Activated CD4-positive, alpha-beta memory T cell treated with anti-CD3 and anti-CD28 coated beads for 36 hours (primary cell): ENCODE measurements at regions of chr13 and their contacts with region 1.

Region 1: DNA sequence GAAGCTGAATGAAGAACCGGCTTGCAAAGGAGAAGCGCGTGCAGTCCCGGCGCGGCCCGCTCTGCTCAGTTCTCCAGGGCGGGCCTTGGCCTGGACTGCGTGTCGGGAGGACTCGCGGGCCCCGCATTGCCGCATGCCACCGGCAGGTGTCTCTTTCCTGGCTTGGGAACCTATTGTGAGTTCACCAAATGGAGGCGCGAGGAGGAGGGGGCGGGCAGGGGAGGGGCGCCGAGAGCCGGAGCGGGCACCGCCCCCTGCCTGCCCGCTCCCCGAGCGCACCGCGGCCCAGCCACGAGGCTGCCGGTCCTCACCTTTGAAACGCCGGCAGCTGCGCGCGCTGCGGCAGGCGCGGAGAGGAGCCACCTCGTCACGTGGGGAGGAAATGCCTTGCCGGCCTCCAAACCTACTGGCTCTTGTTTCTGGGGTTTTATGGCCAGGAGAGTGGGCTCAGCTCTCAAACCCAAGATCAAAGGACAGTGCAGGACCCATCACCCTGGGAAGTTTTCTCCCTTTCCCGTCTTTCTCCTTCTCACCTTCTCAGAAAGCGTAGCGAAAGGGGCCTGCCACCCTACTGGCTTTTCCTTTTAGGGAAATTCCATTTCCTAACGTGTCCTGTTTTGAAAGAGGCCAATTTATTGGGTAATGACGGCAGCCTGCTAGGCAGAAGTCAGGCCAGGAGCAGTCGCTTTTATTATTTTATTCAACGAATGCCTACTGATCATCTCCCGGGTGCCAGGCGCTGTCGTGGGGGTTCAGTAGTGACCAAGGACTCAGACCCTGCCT is 13.8 kb upstream of the UBE2L5 start:
- DNase-seq: peak; percentile 97
- H3K4me3 Mint-ChIP-seq: peak overlapping the region; percentile 43
- H3K27ac Mint-ChIP-seq: peak overlapping the region; percentile 2
- H3K4me1 Mint-ChIP-seq: peaks cover 18% of the 10 kb centered on the region
- H3K27me3 Mint-ChIP-seq: no peaks in the 10 kb centered on the region

Region 2: GRCh38 chr13:30306762-30307193 is 101.7 kb before region 1 on chr13:
- CTCF ChIA-PET with region 1: interaction called, 11 read pairs
- POLR2A ChIA-PET with region 1: no interaction called
- intact Hi-C with region 1: loop called (anchors 1 kb)
- DNase-seq: peak; percentile 94
- H3K4me3 Mint-ChIP-seq: peak overlapping the region; percentile 84
- H3K27ac Mint-ChIP-seq: peak overlapping the region; percentile 87
- H3K4me1 Mint-ChIP-seq: peaks cover 49% of the 10 kb centered on the region
- H3K27me3 Mint-ChIP-seq: no peaks in the 10 kb centered on the region

Region 3: DNA sequence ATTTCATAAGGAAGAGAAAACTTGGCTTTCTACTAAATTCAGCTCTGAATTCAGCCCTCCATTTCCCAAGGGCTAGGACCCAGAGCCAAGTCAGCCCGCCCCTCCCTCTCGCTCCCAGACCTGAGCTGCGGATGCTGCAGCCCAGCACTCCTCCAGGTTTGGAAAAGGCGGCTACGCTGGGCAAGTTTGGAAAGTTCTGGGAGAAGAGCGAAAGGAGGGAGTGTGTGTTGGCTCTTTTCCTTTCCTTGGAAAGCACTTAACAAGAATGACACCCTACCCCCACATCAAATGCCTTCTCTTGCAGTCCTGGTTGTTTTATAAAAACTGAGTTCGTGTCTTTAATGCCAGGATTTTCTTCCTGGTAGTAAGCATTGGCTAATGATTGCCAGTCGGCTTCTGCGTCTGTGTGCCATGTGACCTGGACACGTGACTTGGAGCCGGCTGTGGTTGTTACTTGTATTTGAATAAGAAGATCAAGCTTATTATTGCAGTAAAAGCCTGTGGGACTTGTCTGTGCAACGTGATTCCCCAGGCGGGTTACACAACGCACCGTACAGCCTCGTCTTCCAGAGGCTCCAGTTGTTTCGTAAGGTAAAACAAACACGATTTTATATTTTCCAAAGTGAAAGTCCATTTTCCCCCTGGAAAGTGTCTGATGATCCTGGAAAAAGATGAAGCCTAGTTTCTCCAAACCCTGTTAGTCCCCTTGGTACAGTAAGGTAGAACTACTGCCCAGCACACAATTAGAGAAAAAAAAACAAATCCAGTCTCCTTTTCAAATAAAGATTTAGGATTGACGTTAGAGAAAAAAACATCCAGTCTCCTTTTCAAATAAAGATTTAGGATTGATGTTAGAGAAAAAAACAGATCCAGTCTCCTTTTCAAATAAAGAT is 13.1 kb before region 1 on chr13:
- CTCF ChIA-PET with region 1: interaction called, 11 read pairs
- POLR2A ChIA-PET with region 1: interaction called, 5 read pairs
- intact Hi-C with region 1: loop called (anchors 2 kb)
- DNase-seq: peak; percentile 85
- H3K4me3 Mint-ChIP-seq: peak overlapping the region; percentile 81
- H3K27ac Mint-ChIP-seq: peak overlapping the region; percentile 83
- H3K4me1 Mint-ChIP-seq: peaks cover 23% of the 10 kb centered on the region
- H3K27me3 Mint-ChIP-seq: no peaks in the 10 kb centered on the region

Region 4: DNA sequence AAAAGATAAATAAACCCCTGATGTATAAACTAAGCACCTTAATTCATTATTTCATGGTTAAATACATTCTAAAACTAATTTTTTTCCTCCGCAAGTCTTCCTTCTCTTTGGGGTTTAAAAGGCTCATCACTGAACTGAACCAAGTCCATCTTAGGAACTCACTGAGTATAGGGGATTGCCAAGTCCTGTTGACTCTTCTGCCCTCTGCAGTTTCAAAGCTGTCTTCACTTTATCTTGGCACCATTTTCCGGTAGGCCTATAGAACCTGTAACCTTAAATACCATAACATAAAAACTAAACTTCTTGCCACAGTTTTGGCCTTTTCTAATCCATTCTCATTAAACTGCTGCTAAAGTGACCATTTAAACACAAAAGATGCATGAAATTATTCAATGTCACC is 142.7 kb after region 1 on chr13:
- CTCF ChIA-PET with region 1: no interaction called
- POLR2A ChIA-PET with region 1: no interaction called
- intact Hi-C with region 1: loop called (anchors 5 kb)
- DNase-seq: no peak
- H3K4me3 Mint-ChIP-seq: no peak overlapping the region
- H3K27ac Mint-ChIP-seq: no peak overlapping the region
- H3K4me1 Mint-ChIP-seq: no peaks in the 10 kb centered on the region
- H3K27me3 Mint-ChIP-seq: no peaks in the 10 kb centered on the region

Region 5: DNA sequence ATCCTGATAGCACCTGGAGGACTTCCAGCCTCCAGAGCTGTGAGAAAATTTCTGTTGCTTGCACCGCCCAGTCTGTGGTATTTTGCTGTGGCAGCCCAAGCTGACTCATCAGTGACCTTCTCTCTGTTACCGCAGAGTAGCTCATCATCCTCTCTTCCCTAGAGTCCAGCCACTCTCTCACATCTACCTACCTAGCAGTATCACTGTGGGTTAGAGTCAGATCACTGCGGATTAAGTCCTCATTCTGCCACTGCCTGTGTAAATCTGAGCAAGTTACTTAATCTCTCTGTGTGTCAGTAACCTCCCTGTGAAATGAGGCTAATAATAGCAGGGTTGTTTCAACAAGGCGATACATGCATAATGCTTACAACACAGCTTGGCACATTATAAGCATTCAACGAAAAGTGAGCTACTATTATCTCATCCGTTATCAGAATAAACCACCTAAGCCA is 168.9 kb after region 1 on chr13:
- CTCF ChIA-PET with region 1: no interaction called
- POLR2A ChIA-PET with region 1: no interaction called
- intact Hi-C with region 1: loop called (anchors 5 kb)
- DNase-seq: peak; percentile 80
- H3K4me3 Mint-ChIP-seq: no peak overlapping the region
- H3K27ac Mint-ChIP-seq: peak overlapping the region; percentile 11
- H3K4me1 Mint-ChIP-seq: peaks cover 23% of the 10 kb centered on the region
- H3K27me3 Mint-ChIP-seq: peaks cover 1% of the 10 kb centered on the region

Region 6: GRCh38 chr13:30802953-30803478 is 394.5 kb after region 1 on chr13:
- CTCF ChIA-PET with region 1: interaction called, 3 read pairs
- POLR2A ChIA-PET with region 1: no interaction called
- intact Hi-C with region 1: loop called (anchors 1 kb)
- DNase-seq: peak; percentile 89
- H3K4me3 Mint-ChIP-seq: no peak overlapping the region
- H3K27ac Mint-ChIP-seq: no peak overlapping the region
- H3K4me1 Mint-ChIP-seq: peaks cover 14% of the 10 kb centered on the region
- H3K27me3 Mint-ChIP-seq: no peaks in the 10 kb centered on the region